HepG2 (cell line): ENCODE measurements at regions of chr2 and their contacts with region 1.

Region 1: DNA sequence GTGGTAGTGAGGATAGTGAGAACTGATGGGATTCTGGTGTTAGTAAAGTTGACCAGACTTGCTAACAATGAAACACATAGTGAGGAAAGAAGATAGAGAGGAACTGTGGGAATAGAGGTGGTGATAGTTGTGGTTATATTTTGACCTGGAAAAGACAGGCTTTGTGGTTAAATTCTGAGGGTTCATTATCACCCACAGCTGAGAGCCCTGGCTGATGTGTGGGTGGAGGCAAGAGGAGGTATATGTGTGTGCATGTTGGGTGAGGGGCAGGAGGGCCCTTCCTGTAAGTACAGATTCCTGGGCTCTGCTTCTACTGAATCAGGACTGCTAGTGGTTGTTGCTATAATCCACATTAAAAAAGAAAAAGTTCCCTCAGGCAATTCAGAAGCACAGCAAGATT is 26.2 kb upstream of the TMEM163 start:
- DNase-seq: no peak
- ATAC-seq: no peak
- H3K4me3 ChIP-seq: no peak overlapping the region
- H3K27ac ChIP-seq: no peak overlapping the region
- H3K4me1 ChIP-seq: no peaks in the 10 kb centered on the region
- H3K27me3 ChIP-seq: no peaks in the 10 kb centered on the region; a peak in 1 of 5 replicates
- CTCF ChIP-seq: no peak
- EP300 ChIP-seq: no peak
- POLR2A ChIP-seq: no peak
- RAD21 ChIP-seq: no peak

Region 2: GRCh38 chr2:134722728-134723127 is 22.3 kb before region 1 on chr2:
- CTCF ChIA-PET with region 1: no interaction called
- POLR2A ChIA-PET with region 1: no interaction called
- in situ Hi-C with region 1: no loop called
- intact Hi-C with region 1: loop called (anchors 1 kb)
- DNase-seq: no peak
- ATAC-seq: peak; percentile 28; the same call in 1 of the 3 replicates
- H3K4me3 ChIP-seq: no peak overlapping the region
- H3K27ac ChIP-seq: no peak overlapping the region
- H3K4me1 ChIP-seq: no peaks in the 10 kb centered on the region
- H3K27me3 ChIP-seq: peaks cover 4 to 43% of the 10 kb centered on the region in 2 experiments; a peak in 4 of 5 replicates
- CTCF ChIP-seq: peak; percentile 30; the same call in 1 of the 2 replicates
- EP300 ChIP-seq: no peak
- POLR2A ChIP-seq: no peak
- RAD21 ChIP-seq: no peak